OCI-LY7 (cell line): ENCODE measurements at regions of chr21 and their contacts with region 1.

Region 1: DNA sequence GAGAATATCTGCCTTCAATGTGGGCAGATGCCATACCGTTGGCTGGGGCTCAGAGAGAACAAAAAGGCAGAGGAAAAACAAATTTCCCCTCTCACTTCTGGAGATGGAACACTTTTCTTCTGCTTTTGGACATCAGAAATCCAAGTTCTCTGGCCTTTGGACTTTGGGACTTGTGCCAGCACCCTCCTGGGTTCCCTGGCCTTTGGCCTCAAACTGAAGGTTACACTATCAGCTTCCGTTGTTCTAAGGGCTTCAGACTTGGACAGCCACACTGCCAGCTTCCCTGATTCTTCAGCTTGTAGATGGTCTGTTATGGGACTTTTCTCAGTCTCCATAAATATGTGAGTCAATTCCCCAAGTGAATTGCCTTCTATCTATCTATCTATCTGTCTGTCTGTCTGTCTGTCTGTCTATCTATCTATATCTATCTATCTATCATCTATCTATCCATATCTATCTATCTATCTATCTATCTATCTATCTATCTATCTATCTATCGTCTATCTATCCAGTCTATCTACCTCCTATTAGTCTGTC is 778.1 kb upstream of the TMPRSS15 start:
- DNase-seq: no peak
- H3K4me3 ChIP-seq: no peak overlapping the region
- H3K27ac ChIP-seq: no peak overlapping the region
- H3K4me1 ChIP-seq: no peaks in the 10 kb centered on the region
- CTCF ChIP-seq: no peak

Region 2: DNA sequence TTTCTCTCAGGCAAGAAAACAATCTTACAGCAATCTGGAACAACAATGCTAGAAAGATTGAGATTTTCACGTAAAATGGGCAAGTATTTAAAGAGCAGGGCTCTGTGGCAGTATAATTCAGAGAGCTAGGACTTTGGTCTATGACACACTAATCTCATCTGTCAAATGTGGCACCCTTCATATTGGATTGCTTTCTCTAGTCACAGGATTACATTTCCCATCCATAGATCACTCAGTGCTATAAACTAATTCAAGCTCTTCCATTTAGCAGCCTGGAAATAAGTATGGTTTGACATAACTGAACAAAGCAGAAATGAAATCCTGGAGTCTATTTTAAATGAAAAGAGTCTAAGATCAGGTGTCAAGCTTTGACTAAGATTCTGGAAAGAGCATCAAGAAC is 514.9 kb before region 1 on chr21:
- CTCF ChIA-PET with region 1: no interaction called
- POLR2A ChIA-PET with region 1: interaction called, 11 read pairs
- intact Hi-C with region 1: no loop called
- DNase-seq: no peak
- H3K4me3 ChIP-seq: no peak overlapping the region
- H3K27ac ChIP-seq: no peak overlapping the region
- H3K4me1 ChIP-seq: no peaks in the 10 kb centered on the region
- CTCF ChIP-seq: no peak

Region 3: DNA sequence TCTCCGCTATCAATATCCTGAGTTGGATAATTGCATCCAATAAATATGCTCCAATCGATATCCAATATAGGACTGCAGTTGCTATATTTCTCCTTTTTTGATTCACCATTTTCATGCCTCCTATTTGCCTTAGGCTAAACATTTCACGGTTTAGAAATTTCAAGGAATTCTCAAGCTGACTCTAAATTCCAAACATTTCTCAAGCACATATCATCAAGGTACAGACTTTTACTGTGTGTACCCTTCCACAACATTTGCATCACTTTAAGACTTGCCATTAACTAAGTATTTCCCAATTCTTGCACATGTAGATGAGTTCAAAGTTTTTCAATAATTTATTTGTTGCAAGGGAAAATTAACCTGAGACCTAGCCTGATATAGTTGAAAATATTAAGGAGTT is 17.1 kb after region 1 on chr21:
- CTCF ChIA-PET with region 1: no interaction called
- POLR2A ChIA-PET with region 1: no interaction called
- intact Hi-C with region 1: no loop called
- DNase-seq: no peak
- H3K4me3 ChIP-seq: no peak overlapping the region
- H3K27ac ChIP-seq: no peak overlapping the region
- H3K4me1 ChIP-seq: no peaks in the 10 kb centered on the region
- CTCF ChIP-seq: no peak

Region 4: GRCh38 chr21:19392390-19392789 is 210.7 kb after region 1 on chr21:
- CTCF ChIA-PET with region 1: no interaction called
- POLR2A ChIA-PET with region 1: no interaction called
- intact Hi-C with region 1: no loop called
- DNase-seq: no peak
- H3K4me3 ChIP-seq: no peak overlapping the region
- H3K27ac ChIP-seq: no peak overlapping the region
- H3K4me1 ChIP-seq: no peaks in the 10 kb centered on the region
- CTCF ChIP-seq: no peak